ENCODE measurements at regions of chr11 and their contacts with region 1.

Region 1: DNA sequence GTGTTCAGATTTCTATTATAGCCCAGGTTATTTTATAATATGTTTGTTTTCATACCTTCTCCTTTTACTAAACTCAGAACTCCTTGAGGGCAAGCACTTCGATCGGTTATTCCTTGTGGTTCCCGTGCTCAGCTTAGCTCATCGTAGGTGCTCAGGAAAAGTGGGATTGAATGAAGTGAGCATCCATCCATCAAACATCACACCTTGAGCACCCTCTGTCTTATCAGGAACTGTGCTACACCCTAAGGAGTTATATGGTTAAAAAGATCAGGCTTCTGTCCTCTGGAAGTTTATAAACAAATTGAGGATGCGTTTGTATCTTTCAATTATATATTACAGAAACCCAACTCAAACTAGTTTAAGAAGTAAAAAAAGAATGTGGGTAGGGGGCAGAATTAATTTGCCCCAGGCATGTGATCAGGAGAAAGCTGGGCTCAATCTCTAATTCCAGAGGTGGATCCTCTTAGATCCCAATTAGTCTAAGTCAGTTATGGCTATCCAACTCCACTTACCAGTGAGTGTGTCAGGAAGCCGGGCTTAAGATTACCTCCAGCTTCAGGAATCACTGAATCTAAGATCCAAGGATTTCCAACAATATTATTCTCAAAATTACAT is 59.9 kb upstream of the RRAS2 start:
- DNase-seq: no peak
- H3K4me3 Mint-ChIP-seq: no peak overlapping the region
- H3K27ac Mint-ChIP-seq: peak overlapping the region; percentile 53
- H3K4me1 Mint-ChIP-seq: peaks cover 40% of the 10 kb centered on the region
- H3K27me3 Mint-ChIP-seq: no peaks in the 10 kb centered on the region

Region 2: GRCh38 chr11:14300661-14301304 is 118.1 kb before region 1 on chr11:
- intact Hi-C with region 1: loop called (anchors 1 kb)
- DNase-seq: peak; percentile 82
- H3K4me3 Mint-ChIP-seq: no peak overlapping the region
- H3K27ac Mint-ChIP-seq: no peak overlapping the region
- H3K4me1 Mint-ChIP-seq: peaks cover 16% of the 10 kb centered on the region
- H3K27me3 Mint-ChIP-seq: no peaks in the 10 kb centered on the region